B cell (primary cell): ENCODE measurements at regions of chr11 and their contacts with region 1.

Region 1: DNA sequence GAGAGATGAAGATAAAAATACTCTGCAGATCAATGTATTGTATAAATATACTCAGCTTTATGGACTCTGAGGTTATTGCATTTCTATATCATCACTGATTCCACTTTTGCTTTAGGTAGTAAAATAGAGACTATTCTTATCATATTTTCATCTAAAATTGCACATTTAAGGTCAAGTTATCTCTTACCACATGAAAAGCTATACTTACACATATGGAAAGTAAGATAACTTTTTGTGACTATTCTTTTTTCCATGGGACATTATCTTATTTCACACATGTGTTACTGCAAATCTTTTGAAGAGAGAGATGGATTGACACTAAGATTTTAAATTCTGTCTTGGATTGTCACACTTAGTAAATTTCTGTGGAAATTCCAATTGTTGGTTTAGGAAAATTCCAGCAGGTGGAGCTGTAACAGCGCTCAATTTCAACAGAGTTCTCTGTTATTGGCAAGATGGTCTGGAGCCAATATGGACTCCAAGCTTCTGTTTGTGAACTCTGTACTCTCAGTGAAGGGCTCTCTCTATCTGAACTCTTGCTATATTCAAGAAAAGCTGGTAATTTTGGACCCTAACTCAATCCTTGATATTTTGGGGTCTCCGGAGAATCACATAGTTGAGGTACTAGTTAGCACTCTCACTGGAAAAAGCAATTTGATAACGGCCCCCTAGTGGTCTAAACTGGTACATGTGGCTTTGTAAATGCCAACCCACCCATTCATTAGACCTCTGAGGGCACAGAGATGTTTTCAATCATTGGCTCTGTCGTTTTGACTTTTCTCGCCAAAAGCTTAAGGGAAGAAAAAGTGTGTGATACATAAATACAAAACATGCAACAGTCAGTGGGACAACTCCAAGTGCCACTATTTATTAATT is 429.7 kb downstream of the ETS1 start:
- DNase-seq: peak; percentile 82
- ATAC-seq: peak; percentile 91
- H3K4me3 ChIP-seq: peak overlapping the region in 3 of 5 experiments; percentile 22 to 37 (median 23)
- H3K4me3 Mint-ChIP-seq: peak overlapping the region; percentile 81
- H3K27ac ChIP-seq: no peak overlapping the region
- H3K27ac Mint-ChIP-seq: no peak overlapping the region
- H3K4me1 ChIP-seq: peaks cover 0 to 3% of the 10 kb centered on the region in 2 donors
- H3K4me1 Mint-ChIP-seq: peaks cover 2% of the 10 kb centered on the region
- H3K27me3 ChIP-seq: peaks cover 0 to 7% (median 0%) of the 10 kb centered on the region in 4 experiments
- H3K27me3 Mint-ChIP-seq: peaks cover 15% of the 10 kb centered on the region
- CTCF ChIP-seq: peak; percentile 99

Region 2: DNA sequence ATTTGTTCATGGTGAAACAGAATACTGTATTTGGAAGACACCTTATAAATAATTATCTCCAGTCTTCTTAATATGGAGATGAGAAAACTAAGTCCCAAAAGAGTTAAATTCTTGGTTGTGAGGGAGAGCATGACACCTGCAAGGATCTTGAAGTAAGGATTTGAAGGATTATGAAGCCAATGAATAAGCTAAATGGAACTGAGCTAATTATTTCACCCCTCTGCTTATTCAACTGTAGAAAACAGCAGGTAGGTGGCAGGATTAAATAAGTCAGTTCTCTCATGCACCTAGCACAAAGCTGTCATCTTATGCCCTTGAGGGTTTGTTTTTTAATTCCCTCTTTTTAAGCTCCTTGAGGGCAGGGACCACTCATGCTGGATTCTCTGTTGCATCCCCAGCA is 27.6 kb before region 1 on chr11:
- CTCF ChIA-PET with region 1: interaction called, 18 read pairs
- POLR2A ChIA-PET with region 1: no interaction called
- intact Hi-C with region 1: no loop called
- DNase-seq: no peak
- ATAC-seq: no peak
- H3K4me3 ChIP-seq: no peak overlapping the region
- H3K4me3 Mint-ChIP-seq: no peak overlapping the region
- H3K27ac ChIP-seq: no peak overlapping the region
- H3K27ac Mint-ChIP-seq: no peak overlapping the region
- H3K4me1 ChIP-seq: no peaks in the 10 kb centered on the region
- H3K4me1 Mint-ChIP-seq: no peaks in the 10 kb centered on the region
- H3K27me3 ChIP-seq: peaks cover 0 to under 1% (median 0%) of the 10 kb centered on the region in 4 experiments
- H3K27me3 Mint-ChIP-seq: peaks cover 13% of the 10 kb centered on the region
- CTCF ChIP-seq: no peak

Region 3: GRCh38 chr11:128725630-128726319 is 568.1 kb after region 1 on chr11:
- CTCF ChIA-PET with region 1: interaction called, 11 read pairs
- POLR2A ChIA-PET with region 1: no interaction called
- intact Hi-C with region 1: no loop called
- DNase-seq: peak; percentile 90
- ATAC-seq: peak; percentile 67
- H3K4me3 ChIP-seq: peak overlapping the region; percentile 27 to 57 (median 43)
- H3K4me3 Mint-ChIP-seq: peak overlapping the region; percentile 93
- H3K27ac ChIP-seq: peak overlapping the region; percentile 70 to 88
- H3K27ac Mint-ChIP-seq: peak overlapping the region; percentile 92
- H3K4me1 ChIP-seq: peaks cover 98 to 100% of the 10 kb centered on the region in 2 donors
- H3K4me1 Mint-ChIP-seq: peaks cover 96% of the 10 kb centered on the region
- H3K27me3 ChIP-seq: no peaks in the 10 kb centered on the region
- H3K27me3 Mint-ChIP-seq: no peaks in the 10 kb centered on the region
- CTCF ChIP-seq: no peak

Region 4: DNA sequence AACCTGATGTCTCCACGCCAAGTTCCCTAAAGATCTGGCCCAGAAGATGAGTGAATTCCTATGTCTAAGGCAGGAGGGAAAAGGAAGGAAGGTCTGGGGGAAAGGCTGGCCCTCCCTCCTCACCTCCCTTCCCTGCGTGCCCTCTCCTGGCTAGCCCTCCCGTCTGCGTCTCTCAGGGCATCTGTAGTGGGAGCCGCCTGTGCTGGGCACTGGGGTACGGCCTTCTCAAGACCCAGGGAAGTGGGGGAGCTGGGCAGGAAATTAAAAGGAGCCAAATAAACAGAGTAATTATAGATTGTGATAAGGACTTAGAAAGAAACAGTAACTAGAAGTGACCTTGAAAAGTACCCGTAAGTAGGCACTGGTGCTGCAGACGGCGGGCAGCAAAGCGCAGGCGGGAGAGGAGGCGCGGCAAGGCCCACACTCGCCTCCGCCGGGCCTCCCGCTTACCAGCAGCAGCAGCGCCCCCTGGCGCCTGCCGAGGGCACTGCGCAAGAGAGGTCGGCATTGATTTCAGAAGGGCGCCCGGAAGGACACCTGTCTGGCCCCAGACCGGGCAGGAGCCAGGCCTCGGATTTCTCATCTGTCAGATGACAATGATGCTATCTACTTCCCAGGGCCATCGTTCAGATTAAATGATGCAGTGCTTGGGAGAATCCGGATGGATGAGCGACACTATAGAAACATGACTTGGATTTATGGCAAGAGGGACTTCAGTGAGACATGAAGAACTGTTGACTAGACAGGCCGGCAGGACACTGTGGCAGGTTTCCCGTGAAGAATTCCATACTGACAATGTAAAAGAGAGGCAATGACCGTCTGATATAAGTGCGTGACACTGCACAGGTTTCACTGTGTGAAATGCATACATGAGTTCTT is 702.1 kb after region 1 on chr11:
- CTCF ChIA-PET with region 1: interaction called, 42 read pairs
- POLR2A ChIA-PET with region 1: no interaction called
- intact Hi-C with region 1: loop called (anchors 1 kb)
- DNase-seq: peak; percentile 87
- ATAC-seq: peak; percentile 99
- H3K4me3 ChIP-seq: no peak overlapping the region
- H3K4me3 Mint-ChIP-seq: no peak overlapping the region
- H3K27ac ChIP-seq: no peak overlapping the region
- H3K27ac Mint-ChIP-seq: peak overlapping the region; percentile 59
- H3K4me1 ChIP-seq: peaks cover 9 to 17% of the 10 kb centered on the region in 2 donors
- H3K4me1 Mint-ChIP-seq: peaks cover 21% of the 10 kb centered on the region
- H3K27me3 ChIP-seq: no peaks in the 10 kb centered on the region
- H3K27me3 Mint-ChIP-seq: peaks cover 3% of the 10 kb centered on the region
- CTCF ChIP-seq: peak; percentile 100

Region 5: GRCh38 chr11:128905345-128906184 is 747.9 kb after region 1 on chr11:
- CTCF ChIA-PET with region 1: interaction called, 24 read pairs
- POLR2A ChIA-PET with region 1: no interaction called
- intact Hi-C with region 1: no loop called
- DNase-seq: peak; percentile 60
- ATAC-seq: peak; percentile 57
- H3K4me3 ChIP-seq: peak overlapping the region; percentile 8 to 81 (median 59)
- H3K4me3 Mint-ChIP-seq: peak overlapping the region; percentile 81
- H3K27ac ChIP-seq: no peak overlapping the region
- H3K27ac Mint-ChIP-seq: peak overlapping the region; percentile 50
- H3K4me1 ChIP-seq: peaks cover 21 to 28% of the 10 kb centered on the region in 2 donors
- H3K4me1 Mint-ChIP-seq: peaks cover 26% of the 10 kb centered on the region
- H3K27me3 ChIP-seq: peaks cover 0 to 92% (median 57%) of the 10 kb centered on the region in 4 experiments
- H3K27me3 Mint-ChIP-seq: peaks cover 69% of the 10 kb centered on the region
- CTCF ChIP-seq: peak; percentile 60